T-cell (primary cell): ENCODE measurements at regions of chr16 and their contacts with region 1.

Region 1: GRCh38 chr16:23452572-23453337 is at the start of gene COG7:
- DNase-seq: peak; percentile 56 to 88 (median 77)
- ATAC-seq: peak; percentile 90 to 94 (median 90)
- H3K4me3 ChIP-seq: peak within 1 kb of the TSS; percentile 95 to 97
- H3K4me3 Mint-ChIP-seq: peak within 1 kb of the TSS; percentile 90 to 99 (median 96)
- H3K27ac ChIP-seq: peak within 1 kb of the TSS; percentile 25
- H3K27ac Mint-ChIP-seq: peak within 1 kb of the TSS; percentile 70 to 90
- H3K4me1 ChIP-seq: peaks cover 4 to 21% of the 10 kb centered on the region in 2 experiments
- H3K4me1 Mint-ChIP-seq: peaks cover 30 to 43% (median 37%) of the 10 kb centered on the region in 3 donors
- H3K27me3 ChIP-seq: no peaks in the 10 kb centered on the region
- H3K27me3 Mint-ChIP-seq: no peaks in the 10 kb centered on the region
- total RNA-seq, gene COG7: 15.8 to 23.2 (median 22.4) TPM

Region 2: GRCh38 chr16:23227529-23227928 is 225.2 kb before region 1 on chr16:
- CTCF ChIA-PET with region 1: no interaction called
- POLR2A ChIA-PET with region 1: no interaction called
- DNase-seq: no peak
- ATAC-seq: no peak
- H3K4me3 ChIP-seq: no peak overlapping the region
- H3K4me3 Mint-ChIP-seq: no peak overlapping the region
- H3K27ac ChIP-seq: no peak overlapping the region
- H3K27ac Mint-ChIP-seq: no peak overlapping the region
- H3K4me1 ChIP-seq: no peaks in the 10 kb centered on the region
- H3K4me1 Mint-ChIP-seq: no peaks in the 10 kb centered on the region
- H3K27me3 ChIP-seq: peaks cover 0 to 4% of the 10 kb centered on the region in 2 experiments
- H3K27me3 Mint-ChIP-seq: peaks cover 10 to 11% of the 10 kb centered on the region in 2 donors

Region 3: GRCh38 chr16:23435500-23435899 is 17.3 kb before region 1 on chr16:
- CTCF ChIA-PET with region 1: interaction called, 5 to 13 read pairs
- POLR2A ChIA-PET with region 1: no interaction called
- DNase-seq: peak; percentile 18 to 77 (median 49)
- ATAC-seq: peak; percentile 80 to 90 (median 83)
- H3K4me3 ChIP-seq: no peak overlapping the region
- H3K4me3 Mint-ChIP-seq: no peak overlapping the region
- H3K27ac ChIP-seq: no peak overlapping the region
- H3K27ac Mint-ChIP-seq: no peak overlapping the region
- H3K4me1 ChIP-seq: no peaks in the 10 kb centered on the region
- H3K4me1 Mint-ChIP-seq: peaks cover 0 to 7% (median 5%) of the 10 kb centered on the region in 3 donors
- H3K27me3 ChIP-seq: no peaks in the 10 kb centered on the region
- H3K27me3 Mint-ChIP-seq: no peaks in the 10 kb centered on the region